ENCODE measurements at regions of chr3 and their contacts with region 1.

Region 1: DNA sequence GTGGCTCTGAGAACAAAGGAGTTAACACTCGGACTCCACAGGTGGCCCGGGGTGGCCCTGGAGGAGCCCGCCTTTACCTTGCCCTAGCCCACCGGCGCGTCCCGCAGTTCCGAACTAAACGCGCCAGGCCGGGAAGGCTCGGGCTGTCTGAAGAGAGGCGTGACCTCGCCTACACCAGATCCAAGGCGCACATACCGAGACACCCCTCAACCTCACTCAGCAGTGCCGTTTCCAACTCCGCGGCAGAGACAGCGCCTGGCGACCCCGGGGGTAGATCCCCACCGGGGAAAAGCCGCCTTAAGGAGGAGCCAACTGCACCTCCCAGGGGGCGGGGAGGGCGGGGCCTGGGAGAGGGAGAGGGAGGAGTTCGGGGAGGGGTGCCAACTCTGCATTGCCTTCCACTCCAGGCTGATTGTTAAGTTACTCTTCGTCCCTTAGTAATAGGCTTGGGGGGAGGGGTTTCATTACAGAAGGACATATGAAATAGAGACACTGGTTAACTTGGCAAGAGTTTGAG is at the start of gene DLG1:
- DNase-seq: peak; percentile 94
- H3K4me3 ChIP-seq: peak within 1 kb of the TSS; percentile 61 to 98 (median 73)
- H3K27ac ChIP-seq: peak within 1 kb of the TSS; percentile 64
- H3K4me1 ChIP-seq: peaks cover 18% of the 10 kb centered on the region
- H3K27me3 ChIP-seq: no peaks in the 10 kb centered on the region
- CTCF ChIP-seq: no peak
- POLR2A ChIP-seq: peak; percentile 30
- total RNA-seq, gene DLG1: 66.0 and 80.1 TPM in 2 replicates

Region 2: GRCh38 chr3:197309528-197310361 is 11.3 kb after region 1 on chr3:
- CTCF ChIA-PET with region 1: interaction called, 4 read pairs
- POLR2A ChIA-PET with region 1: no interaction called
- dilution Hi-C with region 1: no loop called
- intact Hi-C with region 1: loop called (anchors 1 kb)
- DNase-seq: peak; percentile 75
- H3K4me3 ChIP-seq: no peak overlapping the region
- H3K27ac ChIP-seq: peak overlapping the region; percentile 46
- H3K4me1 ChIP-seq: peaks cover 13% of the 10 kb centered on the region
- H3K27me3 ChIP-seq: no peaks in the 10 kb centered on the region
- CTCF ChIP-seq: no peak
- POLR2A ChIP-seq: no peak

Region 3: GRCh38 chr3:197394464-197395321 is 96.3 kb after region 1 on chr3:
- CTCF ChIA-PET with region 1: interaction called, 3 read pairs
- POLR2A ChIA-PET with region 1: interaction called, 5 read pairs
- dilution Hi-C with region 1: no loop called
- intact Hi-C with region 1: loop called (anchors 5 kb)
- DNase-seq: peak; percentile 94
- H3K4me3 ChIP-seq: no peak overlapping the region
- H3K27ac ChIP-seq: peak overlapping the region; percentile 90
- H3K4me1 ChIP-seq: peaks cover 33% of the 10 kb centered on the region
- H3K27me3 ChIP-seq: peaks cover 4 to 5% of the 10 kb centered on the region in 2 experiments
- CTCF ChIP-seq: no peak
- POLR2A ChIP-seq: no peak

Region 4: DNA sequence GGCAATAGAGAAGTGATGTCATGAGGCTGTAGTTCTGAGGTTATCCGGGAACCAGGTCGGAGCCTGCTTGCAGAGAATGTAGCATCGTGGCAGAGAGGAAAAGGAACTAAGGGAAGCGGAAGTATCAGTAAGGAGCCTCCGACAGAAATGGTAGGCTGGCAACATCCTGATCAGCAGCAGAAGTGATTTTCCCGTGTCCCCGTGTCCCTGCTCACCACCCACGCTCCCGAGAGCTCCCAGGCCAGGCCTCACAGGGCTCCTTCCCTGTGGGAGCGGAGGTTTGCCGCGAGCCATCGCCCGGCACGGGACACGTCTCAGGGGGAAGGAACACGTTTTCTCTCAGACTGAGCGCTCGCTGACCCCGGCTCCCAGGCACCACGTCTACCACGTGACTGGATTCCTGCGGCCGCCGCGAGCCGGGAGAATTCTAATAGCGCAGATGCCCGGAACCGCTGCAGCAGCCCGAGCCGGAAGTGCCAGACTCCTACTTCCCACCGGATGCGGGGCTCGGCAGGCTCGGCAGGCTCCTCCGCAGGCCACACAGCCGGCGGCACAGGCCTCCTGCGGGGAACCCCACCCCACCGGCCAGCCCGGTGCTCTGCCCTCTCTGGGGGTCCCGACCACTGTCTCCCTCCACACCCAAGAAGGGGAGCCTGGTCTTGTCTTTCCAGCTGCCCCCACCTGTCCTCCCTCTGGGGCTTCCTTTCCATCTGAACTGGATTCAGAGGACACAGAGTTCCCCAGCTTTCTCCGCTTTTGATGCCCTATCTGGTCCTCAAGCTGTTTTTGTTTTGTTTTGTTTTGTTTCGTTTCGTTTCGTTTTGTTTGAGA is 158.1 kb after region 1 on chr3:
- CTCF ChIA-PET with region 1: no interaction called
- POLR2A ChIA-PET with region 1: no interaction called
- dilution Hi-C with region 1: no loop called
- intact Hi-C with region 1: loop called (anchors 1 kb)
- DNase-seq: peak; percentile 77
- H3K4me3 ChIP-seq: peak overlapping the region in 2 of 3 experiments; percentile 12 to 35
- H3K27ac ChIP-seq: peak overlapping the region; percentile 47
- H3K4me1 ChIP-seq: peaks cover 11% of the 10 kb centered on the region
- H3K27me3 ChIP-seq: no peaks in the 10 kb centered on the region
- CTCF ChIP-seq: no peak
- POLR2A ChIP-seq: peak; percentile 89

Region 5: DNA sequence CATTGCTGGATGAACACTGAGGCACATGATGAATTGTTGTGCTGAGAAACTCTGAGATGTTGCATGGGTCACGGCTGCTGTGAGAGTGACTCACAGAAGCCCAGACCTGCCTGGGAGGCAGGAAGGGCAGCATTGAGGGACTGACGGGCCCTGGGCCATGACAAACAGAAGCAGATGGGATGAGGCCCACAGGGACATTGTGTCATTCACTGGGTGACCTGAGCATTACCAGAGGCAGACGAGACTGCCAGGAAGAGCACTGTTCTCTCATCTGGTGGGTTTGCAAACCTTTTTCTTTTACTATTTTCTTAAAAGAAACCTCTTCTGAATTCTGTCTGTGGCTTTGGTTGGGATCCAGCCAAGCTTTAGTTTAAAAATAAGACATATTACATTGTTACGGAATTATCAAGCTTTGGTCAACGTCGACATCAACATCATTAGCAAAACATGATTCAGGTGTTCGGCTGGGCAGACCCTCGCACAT is 189.6 kb after region 1 on chr3:
- CTCF ChIA-PET with region 1: no interaction called
- POLR2A ChIA-PET with region 1: interaction called, 3 read pairs
- dilution Hi-C with region 1: no loop called
- intact Hi-C with region 1: loop called (anchors 1 kb)
- DNase-seq: peak; percentile 98
- H3K4me3 ChIP-seq: no peak overlapping the region
- H3K27ac ChIP-seq: peak overlapping the region; percentile 87
- H3K4me1 ChIP-seq: peaks cover 46% of the 10 kb centered on the region
- H3K27me3 ChIP-seq: no peaks in the 10 kb centered on the region
- CTCF ChIP-seq: no peak
- POLR2A ChIP-seq: no peak

Region 6: GRCh38 chr3:197511130-197511529 is 212.7 kb after region 1 on chr3:
- CTCF ChIA-PET with region 1: no interaction called
- POLR2A ChIA-PET with region 1: no interaction called
- dilution Hi-C with region 1: no loop called
- intact Hi-C with region 1: loop called (anchors 1 kb)
- DNase-seq: no peak
- H3K4me3 ChIP-seq: no peak overlapping the region
- H3K27ac ChIP-seq: no peak overlapping the region
- H3K4me1 ChIP-seq: peaks cover 4% of the 10 kb centered on the region
- H3K27me3 ChIP-seq: no peaks in the 10 kb centered on the region
- CTCF ChIP-seq: no peak
- POLR2A ChIP-seq: no peak